Activated B cell treated with CpG ODN at 0.5 μM for 24 hours (primary cell): ENCODE measurements at regions of chr7 and their contacts with region 1.

Region 1: DNA sequence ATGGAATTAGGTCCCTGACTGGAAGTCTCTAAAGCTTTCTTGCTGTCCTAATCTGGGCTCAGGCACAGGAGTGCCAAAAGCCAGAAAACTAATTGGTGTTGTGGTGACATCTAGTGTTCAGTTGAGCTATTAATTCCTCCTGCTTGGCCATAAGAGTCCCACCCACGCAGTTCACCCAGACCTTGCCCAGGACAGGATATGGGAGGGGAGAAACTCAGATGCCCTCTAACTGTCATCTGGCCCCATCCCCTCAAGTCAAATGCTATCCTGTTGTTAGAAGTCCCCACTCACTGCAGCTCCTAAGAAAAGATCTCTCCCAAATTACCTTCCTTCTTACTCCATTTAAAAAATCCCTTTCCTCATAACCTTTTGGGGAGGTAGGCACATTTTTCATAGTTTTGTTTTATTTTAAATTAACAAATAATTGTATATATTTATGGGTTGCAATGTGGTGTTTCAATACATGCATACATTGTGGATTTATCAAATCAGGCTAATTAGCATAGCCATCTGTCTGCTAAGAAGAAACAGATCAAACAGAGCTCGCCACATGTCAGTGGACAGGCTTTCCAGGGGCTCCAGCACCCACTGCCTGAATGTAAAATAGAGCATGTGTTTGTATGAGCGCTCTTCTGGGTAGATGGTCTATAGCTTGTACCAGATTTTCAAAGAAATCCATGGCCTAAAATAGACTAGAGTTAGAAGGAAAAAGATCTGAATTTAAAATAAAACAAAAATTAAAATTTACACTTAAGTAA is 84.0 kb downstream of the GSAP start:
- DNase-seq: no peak
- ATAC-seq: peak; percentile 73
- H3K4me3 Mint-ChIP-seq: peak overlapping the region; percentile 57
- H3K27ac Mint-ChIP-seq: peak overlapping the region; percentile 38
- H3K4me1 Mint-ChIP-seq: peaks cover 57% of the 10 kb centered on the region
- H3K27me3 Mint-ChIP-seq: no peaks in the 10 kb centered on the region
- CTCF ChIP-seq: no peak

Region 2: GRCh38 chr7:76166404-76167255 is 1165.5 kb before region 1 on chr7:
- CTCF ChIA-PET with region 1: no interaction called
- POLR2A ChIA-PET with region 1: no interaction called
- intact Hi-C with region 1: loop called (anchors 10 kb)
- DNase-seq: peak; percentile 84
- ATAC-seq: peak; percentile 86
- H3K4me3 Mint-ChIP-seq: peak overlapping the region; percentile 86
- H3K27ac Mint-ChIP-seq: peak overlapping the region; percentile 73
- H3K4me1 Mint-ChIP-seq: peaks cover 5% of the 10 kb centered on the region
- H3K27me3 Mint-ChIP-seq: peaks cover 2% of the 10 kb centered on the region
- CTCF ChIP-seq: no peak

Region 3: GRCh38 chr7:76291343-76292212 is 1040.5 kb before region 1 on chr7:
- CTCF ChIA-PET with region 1: no interaction called
- POLR2A ChIA-PET with region 1: no interaction called
- intact Hi-C with region 1: loop called (anchors 5 kb)
- DNase-seq: peak; percentile 74
- ATAC-seq: peak; percentile 81
- H3K4me3 Mint-ChIP-seq: no peak overlapping the region
- H3K27ac Mint-ChIP-seq: no peak overlapping the region
- H3K4me1 Mint-ChIP-seq: peaks cover 7% of the 10 kb centered on the region
- H3K27me3 Mint-ChIP-seq: peaks cover 9% of the 10 kb centered on the region
- CTCF ChIP-seq: peak; percentile 55

Region 4: GRCh38 chr7:77188731-77189437 is 143.2 kb before region 1 on chr7:
- CTCF ChIA-PET with region 1: no interaction called
- POLR2A ChIA-PET with region 1: no interaction called
- intact Hi-C with region 1: loop called (anchors 2 kb)
- DNase-seq: no peak
- ATAC-seq: no peak
- H3K4me3 Mint-ChIP-seq: no peak overlapping the region
- H3K27ac Mint-ChIP-seq: no peak overlapping the region
- H3K4me1 Mint-ChIP-seq: peaks cover 31% of the 10 kb centered on the region
- H3K27me3 Mint-ChIP-seq: no peaks in the 10 kb centered on the region
- CTCF ChIP-seq: no peak

Region 5: GRCh38 chr7:77199013-77199966 is 132.8 kb before region 1 on chr7 and contains the start of gene FGL2:
- CTCF ChIA-PET with region 1: interaction called, 6 read pairs
- POLR2A ChIA-PET with region 1: no interaction called
- intact Hi-C with region 1: loop called (anchors 2 kb)
- DNase-seq: no peak
- ATAC-seq: peak; percentile 38
- H3K4me3 Mint-ChIP-seq: peak within 1 kb of the TSS; percentile 88
- H3K27ac Mint-ChIP-seq: peak within 1 kb of the TSS; percentile 98
- H3K4me1 Mint-ChIP-seq: peaks cover 60% of the 10 kb centered on the region
- H3K27me3 Mint-ChIP-seq: no peaks in the 10 kb centered on the region
- CTCF ChIP-seq: no peak
- total RNA-seq, gene FGL2: 5.7 and 6.7 TPM in 2 replicates

Region 6: DNA sequence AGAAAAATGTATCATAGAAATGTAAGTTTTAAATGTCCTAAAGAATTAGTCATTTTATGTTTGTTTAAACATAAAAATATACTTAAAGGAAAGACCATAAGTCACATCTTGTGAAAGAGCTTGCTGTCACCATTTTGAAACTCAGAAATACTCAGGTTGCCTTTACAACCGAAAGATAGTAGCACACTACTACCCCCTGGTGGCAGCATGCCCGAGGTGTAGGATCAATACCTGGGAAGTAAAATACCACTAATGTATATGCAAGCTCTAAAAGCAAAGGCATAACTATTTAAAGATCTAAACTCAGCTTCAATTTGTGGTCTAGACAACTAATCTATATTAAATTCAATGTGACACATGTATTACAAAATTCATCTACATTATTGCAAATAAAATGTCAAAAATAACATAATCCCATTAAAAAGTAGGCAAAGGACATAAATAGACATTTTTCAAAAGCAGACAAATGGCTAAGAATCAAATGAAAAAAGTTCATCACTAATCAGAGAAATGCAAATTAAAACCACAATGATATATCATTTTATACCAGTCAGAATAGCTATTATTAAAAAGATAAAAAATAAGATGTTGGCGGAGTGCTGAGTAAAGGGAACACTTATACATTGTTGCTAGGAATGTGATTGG is 84.8 kb before region 1 on chr7:
- CTCF ChIA-PET with region 1: interaction called, 66 read pairs
- POLR2A ChIA-PET with region 1: interaction called, 13 read pairs
- intact Hi-C with region 1: loop called (anchors 1 kb)
- DNase-seq: peak; percentile 70
- ATAC-seq: peak; percentile 99
- H3K4me3 Mint-ChIP-seq: no peak overlapping the region
- H3K27ac Mint-ChIP-seq: no peak overlapping the region
- H3K4me1 Mint-ChIP-seq: no peaks in the 10 kb centered on the region
- H3K27me3 Mint-ChIP-seq: no peaks in the 10 kb centered on the region
- CTCF ChIP-seq: peak; percentile 91

Region 7: DNA sequence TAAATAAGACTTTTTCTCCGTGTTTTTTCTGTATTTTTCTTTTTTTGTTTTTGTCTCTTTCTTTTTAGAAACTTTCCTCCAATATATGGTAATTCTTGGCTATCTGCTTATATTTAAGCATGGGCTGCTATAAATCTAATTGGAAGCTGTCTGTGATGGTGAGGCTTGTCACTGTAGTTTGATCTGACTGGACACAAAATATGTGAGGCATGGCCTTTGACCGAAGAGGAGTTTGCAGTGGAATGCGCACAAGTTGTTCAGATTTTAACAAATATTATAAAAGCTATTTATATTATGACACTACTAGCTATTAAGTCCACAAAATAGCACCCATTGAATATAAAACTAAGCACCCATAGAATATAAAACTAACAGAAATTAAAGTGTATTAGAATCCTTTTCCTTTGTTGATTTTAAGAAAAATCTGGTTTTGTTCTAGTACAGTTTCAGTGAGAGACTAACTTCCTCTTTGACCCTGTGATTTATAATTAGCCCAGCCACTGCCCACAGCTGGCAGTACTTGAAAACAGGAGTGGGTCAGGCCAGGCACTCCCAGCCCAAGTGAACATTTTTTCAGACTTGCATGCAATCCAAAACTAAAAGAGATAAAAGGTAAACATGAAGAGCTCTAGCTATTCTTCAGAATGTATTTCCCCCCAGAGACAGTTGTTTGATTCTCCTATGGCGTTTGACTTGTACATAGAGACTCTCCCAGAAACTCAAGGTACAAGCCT is 62.6 kb before region 1 on chr7:
- CTCF ChIA-PET with region 1: interaction called, 5 read pairs
- POLR2A ChIA-PET with region 1: no interaction called
- intact Hi-C with region 1: loop called (anchors 5 kb)
- DNase-seq: no peak
- ATAC-seq: peak; percentile 58
- H3K4me3 Mint-ChIP-seq: peak overlapping the region; percentile 50
- H3K27ac Mint-ChIP-seq: peak overlapping the region; percentile 75
- H3K4me1 Mint-ChIP-seq: peaks cover 46% of the 10 kb centered on the region
- H3K27me3 Mint-ChIP-seq: no peaks in the 10 kb centered on the region
- CTCF ChIP-seq: no peak